ENCODE measurements at regions of chr19 and their contacts with region 1.

Region 1: DNA sequence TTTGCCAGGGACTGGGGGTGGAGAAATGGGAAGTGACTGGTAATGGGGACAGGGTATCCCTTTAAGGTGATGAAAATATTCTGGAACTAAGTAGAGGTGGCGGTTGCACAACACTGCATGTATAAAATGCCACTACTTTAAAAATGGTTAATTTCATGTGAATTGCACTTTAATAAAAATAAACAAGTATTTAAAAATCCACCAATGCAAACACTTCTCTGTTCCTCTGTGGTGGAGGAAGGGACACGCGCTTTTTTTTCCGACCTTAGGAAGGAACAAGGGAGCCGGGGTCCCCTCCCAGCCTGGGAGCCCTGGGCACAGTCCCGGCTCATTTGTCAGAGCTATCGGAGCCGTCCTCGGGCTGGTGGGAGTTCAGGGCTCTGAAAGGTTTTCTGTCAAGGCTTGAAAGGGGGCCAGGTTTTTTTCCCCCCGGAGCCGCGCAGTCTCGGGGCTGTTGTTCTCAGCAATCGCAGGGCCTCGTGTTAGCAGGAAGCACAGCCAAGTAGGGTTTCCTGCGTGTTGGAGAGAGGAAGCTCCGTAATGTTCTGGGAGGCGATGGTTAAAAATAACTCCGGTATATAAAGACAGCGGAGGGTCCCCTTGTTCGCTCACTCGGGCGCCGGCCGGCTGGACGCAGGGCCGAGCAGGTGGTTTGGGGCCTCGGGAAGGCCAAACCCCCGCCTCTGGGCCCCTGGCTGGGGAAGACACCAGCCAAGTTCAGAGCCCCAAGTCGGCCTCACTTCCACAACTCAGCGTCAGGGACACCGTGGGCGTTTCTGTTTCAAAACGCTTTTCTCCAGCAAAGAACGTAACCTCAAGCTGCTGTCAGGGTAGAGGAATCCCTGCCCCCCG is 41.2 kb upstream of the KLF2 start:
- DNase-seq: no peak
- H3K4me3 ChIP-seq: no peak overlapping the region
- H3K27ac ChIP-seq: no peak overlapping the region
- H3K4me1 ChIP-seq: peaks cover 12% of the 10 kb centered on the region
- H3K27me3 ChIP-seq: peaks cover 27% of the 10 kb centered on the region
- CTCF ChIP-seq: no peak

Region 2: GRCh38 chr19:16013181-16013850 is 270.1 kb before region 1 on chr19:
- CTCF ChIA-PET with region 1: no interaction called
- POLR2A ChIA-PET with region 1: interaction called, 13 read pairs
- intact Hi-C with region 1: no loop called
- DNase-seq: no peak
- H3K4me3 ChIP-seq: no peak overlapping the region
- H3K27ac ChIP-seq: no peak overlapping the region
- H3K4me1 ChIP-seq: no peaks in the 10 kb centered on the region
- H3K27me3 ChIP-seq: no peaks in the 10 kb centered on the region
- CTCF ChIP-seq: no peak

Measured in PC-9 (cell line).